ENCODE measurements at regions of chr3 and their contacts with region 1.

Region 1: DNA sequence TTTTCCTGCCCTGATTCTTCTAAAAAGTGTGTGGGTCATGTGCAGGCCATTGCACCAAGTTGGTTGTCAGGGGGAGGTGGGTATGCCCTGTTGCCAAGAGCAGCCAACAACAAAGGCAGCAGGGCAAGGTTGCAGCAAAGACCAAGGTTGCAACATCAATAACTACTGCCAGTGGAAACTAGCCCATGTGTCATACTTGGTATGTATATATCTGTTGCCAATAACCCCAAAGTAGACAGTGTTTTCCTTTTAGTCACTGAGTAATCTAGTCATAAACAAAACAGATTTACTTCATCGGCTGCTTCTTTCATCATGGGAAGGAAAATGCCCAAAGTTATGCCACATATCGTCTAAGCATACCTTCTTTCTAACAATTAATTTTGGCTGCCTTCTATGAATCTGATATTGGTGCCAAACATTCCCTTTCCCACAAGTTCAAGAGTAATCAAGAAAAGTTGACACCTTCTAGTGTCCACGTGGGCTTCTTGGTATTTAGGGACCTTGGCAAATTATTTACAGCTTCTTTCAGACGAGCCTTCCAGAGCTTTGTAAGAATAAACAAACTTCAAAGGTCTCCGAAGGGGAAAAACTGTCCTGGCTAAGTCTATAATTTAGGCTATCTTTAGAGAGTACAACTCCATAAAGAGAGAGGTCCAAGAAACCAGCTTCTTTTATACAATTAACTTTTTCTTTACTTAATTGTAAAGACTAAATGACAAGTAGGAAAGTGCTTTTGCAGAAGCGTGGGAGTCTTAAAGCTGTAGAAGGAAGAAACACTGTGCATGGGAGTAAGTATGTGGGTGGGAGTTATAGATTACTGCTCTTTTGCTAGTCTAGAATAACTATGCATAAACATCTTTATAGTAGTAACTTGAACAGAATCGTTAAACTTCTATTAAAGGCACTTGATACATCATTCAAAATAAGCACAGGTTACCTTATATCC is 10.0 kb upstream of the MBNL1 start:
- DNase-seq: no peak
- ATAC-seq: peak; percentile 75
- H3K4me3 ChIP-seq: no peak overlapping the region; the same call in 1 of the 2 replicates
- H3K27ac ChIP-seq: peak overlapping the region; percentile 11; the same call in 1 of the 2 replicates
- H3K4me1 ChIP-seq: peaks cover 27% of the 10 kb centered on the region
- H3K27me3 ChIP-seq: no peaks in the 10 kb centered on the region
- CTCF ChIP-seq: no peak
- EP300 ChIP-seq: no peak
- POLR2A ChIP-seq: no peak
- RAD21 ChIP-seq: no peak

Region 2: GRCh38 chr3:152096280-152096906 is 162.3 kb before region 1 on chr3:
- CTCF ChIA-PET with region 1: no interaction called
- POLR2A ChIA-PET with region 1: no interaction called
- RAD21 ChIA-PET with region 1: no interaction called
- SMC1A ChIA-PET with region 1: no interaction called
- in situ Hi-C with region 1: no loop called
- intact Hi-C with region 1: no loop called
- DNase-seq: no peak
- ATAC-seq: no peak
- H3K4me3 ChIP-seq: no peak overlapping the region
- H3K27ac ChIP-seq: no peak overlapping the region
- H3K4me1 ChIP-seq: no peaks in the 10 kb centered on the region
- H3K27me3 ChIP-seq: no peaks in the 10 kb centered on the region
- CTCF ChIP-seq: no peak
- EP300 ChIP-seq: no peak
- POLR2A ChIP-seq: no peak
- RAD21 ChIP-seq: no peak

Region 3: DNA sequence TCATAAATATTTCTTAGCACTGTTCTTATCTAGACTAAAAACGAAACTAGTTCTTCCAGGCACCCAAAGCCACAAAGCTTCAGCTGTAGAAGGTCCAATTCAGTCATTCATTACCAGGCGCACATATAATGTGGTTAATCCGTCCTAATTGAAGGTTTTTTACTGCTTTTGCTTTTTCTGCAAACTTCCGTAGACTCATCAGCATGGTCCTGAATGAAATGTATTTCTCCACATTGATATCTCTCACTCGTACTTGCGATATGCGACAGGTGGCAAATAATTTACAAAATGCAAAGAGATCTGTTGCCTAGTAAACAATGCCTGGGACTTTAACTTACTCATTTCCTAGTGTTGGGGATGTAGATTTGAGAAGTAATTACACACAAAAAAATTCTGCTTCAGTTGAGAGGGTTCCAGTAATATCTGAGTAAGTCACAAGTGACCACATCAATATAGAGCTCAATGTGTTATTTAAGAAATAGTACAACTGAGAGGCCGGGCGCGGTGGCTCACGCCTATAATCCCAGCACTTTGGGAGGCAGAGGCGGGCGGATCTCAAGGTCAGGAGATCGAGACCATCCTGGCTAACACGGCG is 65.0 kb before region 1 on chr3:
- CTCF ChIA-PET with region 1: interaction called, 3 read pairs
- POLR2A ChIA-PET with region 1: interaction called, 4 read pairs
- RAD21 ChIA-PET with region 1: interaction called, 13 read pairs
- SMC1A ChIA-PET with region 1: interaction called, 25 read pairs
- in situ Hi-C with region 1: no loop called
- intact Hi-C with region 1: no loop called
- DNase-seq: no peak
- ATAC-seq: peak; percentile 67
- H3K4me3 ChIP-seq: peak overlapping the region; percentile 44; the same call in 1 of the 2 replicates
- H3K27ac ChIP-seq: peak overlapping the region; percentile 48; the same call in 1 of the 2 replicates
- H3K4me1 ChIP-seq: peaks cover 29% of the 10 kb centered on the region
- H3K27me3 ChIP-seq: no peaks in the 10 kb centered on the region
- CTCF ChIP-seq: no peak
- EP300 ChIP-seq: no peak
- POLR2A ChIP-seq: no peak
- RAD21 ChIP-seq: no peak; the same call in 1 of the 2 replicates

Region 4: GRCh38 chr3:152199102-152199840 is 59.5 kb before region 1 on chr3:
- CTCF ChIA-PET with region 1: interaction called, 6 read pairs
- POLR2A ChIA-PET with region 1: interaction called, 4 read pairs
- RAD21 ChIA-PET with region 1: interaction called, 15 read pairs
- SMC1A ChIA-PET with region 1: interaction called, 25 read pairs
- in situ Hi-C with region 1: no loop called
- intact Hi-C with region 1: no loop called
- DNase-seq: no peak
- ATAC-seq: peak; percentile 14
- H3K4me3 ChIP-seq: peak overlapping the region; percentile 26
- H3K27ac ChIP-seq: peak overlapping the region; percentile 85
- H3K4me1 ChIP-seq: peaks cover 31% of the 10 kb centered on the region
- H3K27me3 ChIP-seq: no peaks in the 10 kb centered on the region
- CTCF ChIP-seq: peak in 1 of 3 experiments; percentile 4; a peak in 1 of 6 replicates
- EP300 ChIP-seq: peak in 1 of 2 experiments; percentile 32; a peak in 1 of 4 replicates
- POLR2A ChIP-seq: no peak
- RAD21 ChIP-seq: no peak

Measured in GM12878 (cell line).